Common myeloid progenitor, CD34-positive (primary cell): ENCODE measurements at regions of chr2 and their contacts with region 1.

Region 1: GRCh38 chr2:201158111-201158929 is 24.6 kb upstream of the CASP10 start:
- DNase-seq: peak; percentile 96 to 99 (median 98)
- H3K4me3 ChIP-seq: peak overlapping the region in 2 of 7 experiments; percentile 42 to 51
- H3K27ac ChIP-seq: peak overlapping the region; percentile 43 to 85
- H3K4me1 ChIP-seq: peaks cover 12 to 46% (median 22%) of the 10 kb centered on the region in 4 experiments
- H3K27me3 ChIP-seq: no peaks in the 10 kb centered on the region

Region 2: DNA sequence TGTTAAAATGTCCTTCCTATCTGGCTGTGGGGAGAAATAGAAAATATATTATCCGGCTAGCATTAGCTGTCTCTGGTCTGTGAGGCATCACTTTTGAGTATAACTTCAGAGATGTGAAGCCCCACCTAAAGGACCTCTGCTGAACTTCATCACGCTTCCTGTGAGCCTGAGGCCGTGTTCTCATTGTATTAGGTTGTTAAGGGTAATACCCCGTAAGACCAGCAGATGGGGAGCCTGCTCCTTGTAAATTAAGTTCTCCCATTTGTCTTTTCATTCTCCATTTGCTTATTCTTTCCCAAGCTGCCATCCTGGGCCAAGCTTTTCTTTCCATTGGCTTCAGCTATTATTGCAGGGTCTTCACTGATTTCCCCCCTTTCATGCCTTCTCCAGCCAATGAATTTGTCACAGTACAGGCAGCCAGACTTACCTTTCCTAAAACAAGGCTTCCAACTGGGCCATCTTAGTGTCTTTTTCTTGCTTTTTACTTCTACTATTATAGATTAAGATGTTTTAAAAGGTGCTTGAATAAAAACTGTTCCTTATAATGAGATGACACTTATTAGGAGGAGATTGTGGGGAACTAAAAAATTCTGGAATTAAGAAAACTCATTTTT is 256.8 kb before region 1 on chr2:
- CTCF ChIA-PET with region 1: interaction called, 11 read pairs
- POLR2A ChIA-PET with region 1: no interaction called
- DNase-seq: peak; percentile 92 to 96 (median 94)
- H3K4me3 ChIP-seq: no peak overlapping the region
- H3K27ac ChIP-seq: no peak overlapping the region
- H3K4me1 ChIP-seq: peaks cover 0 to 4% (median 0%) of the 10 kb centered on the region in 4 experiments
- H3K27me3 ChIP-seq: no peaks in the 10 kb centered on the region

Region 3: GRCh38 chr2:201071479-201072200 is 86.7 kb before region 1 on chr2 and contains the starts of genes HYCC2 and NDUFB3:
- CTCF ChIA-PET with region 1: interaction called, 26 read pairs
- POLR2A ChIA-PET with region 1: no interaction called
- DNase-seq: peak; percentile 97 to 98 (median 98)
- H3K4me3 ChIP-seq: peak within 1 kb of the TSS; percentile 87 to 100 (median 98)
- H3K27ac ChIP-seq: peak within 1 kb of the TSS; percentile 97
- H3K4me1 ChIP-seq: peaks cover 16 to 42% (median 30%) of the 10 kb centered on the region in 4 experiments
- H3K27me3 ChIP-seq: no peaks in the 10 kb centered on the region

Region 4: GRCh38 chr2:201130524-201131186 is 27.7 kb before region 1 on chr2:
- CTCF ChIA-PET with region 1: interaction called, 19 read pairs
- POLR2A ChIA-PET with region 1: interaction called, 3 read pairs
- DNase-seq: peak in 2 of 3 donors; percentile 61 to 74
- H3K4me3 ChIP-seq: peak overlapping the region in 1 of 7 experiments; percentile 36
- H3K27ac ChIP-seq: peak overlapping the region in 1 of 2 experiments; percentile 54
- H3K4me1 ChIP-seq: peaks cover 51 to 76% (median 71%) of the 10 kb centered on the region in 4 experiments
- H3K27me3 ChIP-seq: no peaks in the 10 kb centered on the region

Region 5: DNA sequence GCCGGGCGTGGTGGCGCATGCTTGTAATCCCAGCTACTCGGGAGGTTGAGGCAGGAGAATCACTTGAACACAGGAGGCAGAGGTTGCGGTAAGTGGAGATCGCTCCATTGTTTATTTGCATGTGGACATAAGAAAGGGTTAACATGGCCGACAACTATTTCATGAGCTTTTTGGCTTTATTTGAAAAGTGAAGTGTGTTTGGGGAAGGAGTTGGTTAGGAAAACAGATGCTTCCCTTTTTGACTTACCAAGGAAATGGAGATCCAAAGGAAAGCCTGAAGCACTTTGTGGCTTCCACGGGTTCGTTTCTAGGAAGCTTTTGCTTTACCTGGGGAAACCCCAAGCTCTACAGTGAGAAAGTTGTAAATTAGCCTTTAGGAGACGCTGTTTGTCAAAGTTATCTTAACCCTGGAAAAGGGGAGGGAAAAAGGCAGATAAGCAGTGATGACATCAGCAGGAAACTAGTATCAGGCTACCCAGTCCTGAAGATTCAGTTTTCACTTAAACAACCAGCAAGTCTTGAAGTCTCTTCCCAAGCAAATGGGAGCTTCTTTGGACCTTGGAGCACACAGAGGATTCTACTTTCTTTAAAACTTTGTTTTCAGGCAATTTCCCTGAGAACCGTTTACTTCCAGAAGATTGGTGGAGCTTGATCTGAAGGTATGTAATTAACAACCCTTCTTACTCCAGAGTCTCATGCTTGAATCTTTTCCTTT is 24.5 kb after region 1 on chr2 and contains the start of gene CASP10:
- CTCF ChIA-PET with region 1: interaction called, 10 read pairs
- POLR2A ChIA-PET with region 1: interaction called, 4 read pairs
- DNase-seq: peak; percentile 92 to 95 (median 95)
- H3K4me3 ChIP-seq: peak within 1 kb of the TSS; percentile 14 to 100 (median 79)
- H3K27ac ChIP-seq: peak within 1 kb of the TSS; percentile 78 to 90
- H3K4me1 ChIP-seq: peaks cover 29 to 46% (median 30%) of the 10 kb centered on the region in 4 experiments
- H3K27me3 ChIP-seq: no peaks in the 10 kb centered on the region